GM12878 (cell line): ENCODE measurements at regions of chr5 and their contacts with region 1.

Region 1: DNA sequence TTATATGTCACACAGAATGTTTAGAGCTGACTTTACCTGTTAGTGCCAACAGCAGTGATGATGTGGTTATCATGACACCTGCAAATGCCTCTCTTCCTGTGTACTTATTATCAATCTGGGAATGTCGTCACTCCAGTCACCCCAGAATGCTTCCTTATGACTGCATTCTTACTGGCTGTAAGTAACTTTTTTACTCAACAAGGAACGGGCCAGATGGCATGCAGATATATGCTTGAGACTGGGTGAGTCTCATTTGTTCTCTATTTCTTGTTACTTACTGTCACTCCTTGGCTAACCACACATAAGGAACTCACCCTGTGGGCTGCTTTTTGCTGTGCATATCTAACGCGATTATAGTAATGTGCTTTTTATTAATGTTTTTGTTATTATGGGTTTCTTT is 385.5 kb upstream of the MEF2C start:
- DNase-seq: peak; percentile 51
- ATAC-seq: peak; percentile 38
- H3K4me3 ChIP-seq: no peak overlapping the region
- H3K27ac ChIP-seq: peak overlapping the region; percentile 43; the same call in 1 of the 2 replicates
- H3K4me1 ChIP-seq: peaks cover 46% of the 10 kb centered on the region
- H3K27me3 ChIP-seq: no peaks in the 10 kb centered on the region
- CTCF ChIP-seq: no peak
- EP300 ChIP-seq: no peak
- POLR2A ChIP-seq: no peak
- RAD21 ChIP-seq: 0 out of 2 replicates have a peak, but pooled peaks have one; percentile 12

Region 2: DNA sequence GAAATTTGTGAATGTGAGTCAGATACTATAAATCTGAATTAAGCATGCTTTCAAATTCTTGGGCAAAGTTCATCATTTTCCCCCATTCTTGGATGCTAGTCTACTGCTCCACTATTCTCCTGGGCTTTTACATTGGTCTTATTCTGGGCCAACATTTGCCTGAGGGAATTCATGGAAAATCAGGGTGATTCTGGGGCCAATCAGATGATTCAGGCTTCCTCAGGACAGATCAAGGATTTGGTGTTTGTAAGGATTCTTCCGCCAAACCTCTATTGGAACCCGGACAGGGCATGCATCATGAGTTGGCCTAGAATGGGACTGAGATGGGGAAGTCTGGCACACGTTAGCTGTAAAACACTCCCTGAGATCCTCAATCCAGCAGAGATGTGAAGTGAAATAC is 499.3 kb before region 1 on chr5:
- CTCF ChIA-PET with region 1: no interaction called
- POLR2A ChIA-PET with region 1: no interaction called
- RAD21 ChIA-PET with region 1: no interaction called
- SMC1A ChIA-PET with region 1: no interaction called
- in situ Hi-C with region 1: no loop called
- intact Hi-C with region 1: no loop called
- DNase-seq: no peak
- ATAC-seq: no peak
- H3K4me3 ChIP-seq: no peak overlapping the region
- H3K27ac ChIP-seq: no peak overlapping the region
- H3K4me1 ChIP-seq: peaks cover 3% of the 10 kb centered on the region; the same call in 1 of the 2 replicates
- H3K27me3 ChIP-seq: no peaks in the 10 kb centered on the region
- CTCF ChIP-seq: no peak
- EP300 ChIP-seq: no peak
- POLR2A ChIP-seq: no peak
- RAD21 ChIP-seq: no peak

Region 3: DNA sequence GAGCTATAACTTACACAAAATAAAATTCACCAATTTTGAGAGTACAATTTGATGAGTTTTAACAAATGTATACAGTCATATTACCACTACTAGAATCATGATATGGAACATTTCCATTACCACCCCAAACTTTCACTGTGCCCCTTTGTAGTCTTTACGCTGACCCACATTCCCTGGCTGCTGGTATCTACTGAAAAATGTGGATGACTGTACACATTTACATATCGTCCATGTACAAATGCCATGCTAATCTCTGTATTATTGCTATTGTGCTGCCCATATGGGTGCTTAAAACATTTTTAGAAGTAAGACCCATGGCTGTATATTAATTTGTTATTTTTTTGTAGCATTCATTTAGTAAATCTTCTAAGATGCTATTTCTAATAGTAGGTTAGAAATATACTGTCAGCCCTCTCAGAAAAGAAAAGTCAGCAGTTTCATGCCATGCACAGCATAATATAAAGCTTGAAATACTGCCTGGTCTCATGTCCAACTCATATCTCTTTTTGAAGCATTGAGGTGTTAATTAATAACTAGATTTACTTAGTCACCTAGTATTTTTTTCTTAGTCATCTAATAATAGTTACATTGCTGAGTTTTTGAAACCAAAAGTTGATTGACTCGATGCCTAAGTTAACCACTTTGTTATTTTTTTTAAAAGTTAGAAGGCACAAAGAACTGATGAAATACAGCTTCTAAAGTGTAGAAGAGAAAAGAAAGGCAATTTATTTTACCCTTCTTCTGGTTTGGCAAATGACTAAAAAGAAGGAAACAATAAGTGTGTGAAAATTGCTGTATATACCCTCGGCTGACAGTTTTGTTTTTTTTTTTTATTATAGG is 197.1 kb before region 1 on chr5:
- CTCF ChIA-PET with region 1: interaction called, 3 read pairs
- POLR2A ChIA-PET with region 1: interaction called, 4 read pairs
- RAD21 ChIA-PET with region 1: interaction called, 8 read pairs
- SMC1A ChIA-PET with region 1: interaction called, 10 read pairs
- in situ Hi-C with region 1: no loop called
- intact Hi-C with region 1: no loop called
- DNase-seq: peak; percentile 33
- ATAC-seq: peak; percentile 92
- H3K4me3 ChIP-seq: peak overlapping the region; percentile 58
- H3K27ac ChIP-seq: peak overlapping the region; percentile 92
- H3K4me1 ChIP-seq: peaks cover 14% of the 10 kb centered on the region
- H3K27me3 ChIP-seq: no peaks in the 10 kb centered on the region
- CTCF ChIP-seq: no peak
- EP300 ChIP-seq: peak; percentile 52 to 66; a peak in 2 of 4 replicates
- POLR2A ChIP-seq: no peak
- RAD21 ChIP-seq: 0 out of 2 replicates have a peak, but pooled peaks have one; percentile 2

Region 4: DNA sequence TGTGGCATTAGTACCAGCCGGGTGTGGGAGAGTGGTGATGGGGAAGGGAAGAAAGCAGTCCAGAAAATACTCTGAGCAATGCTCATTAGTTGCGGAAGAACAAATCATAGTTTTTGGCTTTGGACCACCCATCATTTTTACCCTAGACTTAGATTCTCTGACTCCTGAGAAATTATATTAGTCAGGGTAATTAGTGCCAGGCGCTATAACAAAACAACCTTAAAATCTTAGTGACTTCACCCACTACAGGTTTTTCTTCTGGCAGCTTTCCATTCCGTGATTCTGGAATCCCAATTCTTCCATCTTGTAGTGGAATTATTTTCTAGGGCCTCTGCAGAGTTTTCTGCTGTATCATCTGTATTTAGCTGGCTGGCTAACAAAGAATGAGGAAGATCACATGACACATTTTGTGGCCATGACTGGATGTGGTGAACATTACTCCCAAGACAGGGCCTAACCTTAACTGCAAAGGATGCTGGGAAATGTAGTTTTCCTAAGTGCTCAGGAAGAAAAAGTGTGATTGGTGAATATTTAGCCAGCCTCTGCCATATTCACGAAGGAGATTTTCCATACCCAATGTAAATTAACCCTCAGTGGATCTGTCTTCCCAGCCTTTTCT is 12.5 kb before region 1 on chr5:
- CTCF ChIA-PET with region 1: interaction called, 6 read pairs
- POLR2A ChIA-PET with region 1: no interaction called
- RAD21 ChIA-PET with region 1: interaction called, 3 read pairs
- SMC1A ChIA-PET with region 1: interaction called, 17 read pairs
- in situ Hi-C with region 1: no loop called
- intact Hi-C with region 1: no loop called
- DNase-seq: no peak
- ATAC-seq: peak; percentile 39; the same call in 2 of the 3 replicates
- H3K4me3 ChIP-seq: no peak overlapping the region
- H3K27ac ChIP-seq: no peak overlapping the region
- H3K4me1 ChIP-seq: no peaks in the 10 kb centered on the region
- H3K27me3 ChIP-seq: no peaks in the 10 kb centered on the region
- CTCF ChIP-seq: no peak
- EP300 ChIP-seq: no peak
- POLR2A ChIP-seq: no peak
- RAD21 ChIP-seq: no peak

Region 5: DNA sequence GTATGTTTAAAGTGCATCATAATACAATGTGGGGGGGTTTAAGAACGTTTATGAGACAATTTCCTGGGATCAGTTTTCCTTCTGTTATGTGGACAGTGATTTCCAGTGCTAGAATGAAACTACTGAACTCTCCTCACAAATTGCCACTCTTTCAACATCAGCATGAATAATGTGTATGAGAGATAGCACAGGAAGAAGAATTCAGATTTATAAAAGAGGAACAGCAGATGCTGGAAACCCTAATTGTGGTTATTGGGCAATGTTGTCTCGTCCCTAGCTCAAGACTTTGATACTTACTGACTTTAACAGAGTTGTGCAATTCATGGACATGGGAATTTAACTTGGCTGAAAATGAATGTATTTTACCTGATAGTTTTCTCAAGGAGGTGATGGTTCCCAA is 25.4 kb after region 1 on chr5:
- CTCF ChIA-PET with region 1: interaction called, 5 read pairs
- POLR2A ChIA-PET with region 1: interaction called, 3 read pairs
- RAD21 ChIA-PET with region 1: interaction called, 20 read pairs
- SMC1A ChIA-PET with region 1: interaction called, 20 read pairs
- in situ Hi-C with region 1: no loop called
- intact Hi-C with region 1: no loop called
- DNase-seq: no peak
- ATAC-seq: peak; percentile 34; the same call in 1 of the 3 replicates
- H3K4me3 ChIP-seq: no peak overlapping the region
- H3K27ac ChIP-seq: no peak overlapping the region
- H3K4me1 ChIP-seq: peaks cover 12% of the 10 kb centered on the region; the same call in 1 of the 2 replicates
- H3K27me3 ChIP-seq: no peaks in the 10 kb centered on the region
- CTCF ChIP-seq: no peak
- EP300 ChIP-seq: no peak
- POLR2A ChIP-seq: no peak
- RAD21 ChIP-seq: no peak

Region 6: DNA sequence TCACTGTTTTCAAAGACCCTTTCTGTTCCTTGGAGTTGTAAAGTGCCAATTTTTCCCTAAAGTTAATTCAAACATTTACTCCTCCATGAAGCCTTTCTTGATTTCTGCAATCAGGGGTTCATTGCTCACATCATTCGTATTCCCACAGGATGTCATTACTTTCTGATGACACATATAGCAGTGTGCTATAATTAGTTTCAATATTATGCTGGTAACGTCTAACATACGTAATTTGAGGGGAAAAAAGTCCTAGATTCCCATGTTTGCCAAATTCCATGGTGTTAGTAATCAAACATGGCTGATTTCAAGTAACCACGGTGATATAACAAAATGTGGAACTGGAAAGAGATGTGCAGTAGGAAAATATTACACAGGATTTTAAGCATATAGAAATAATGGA is 82.8 kb after region 1 on chr5:
- CTCF ChIA-PET with region 1: interaction called, 5 read pairs
- POLR2A ChIA-PET with region 1: no interaction called
- RAD21 ChIA-PET with region 1: interaction called, 40 read pairs
- SMC1A ChIA-PET with region 1: interaction called, 17 read pairs
- in situ Hi-C with region 1: no loop called
- intact Hi-C with region 1: no loop called
- DNase-seq: no peak
- ATAC-seq: peak; percentile 16
- H3K4me3 ChIP-seq: no peak overlapping the region
- H3K27ac ChIP-seq: peak overlapping the region; percentile 68; the same call in 1 of the 2 replicates
- H3K4me1 ChIP-seq: peaks cover 18% of the 10 kb centered on the region; the same call in 1 of the 2 replicates
- H3K27me3 ChIP-seq: no peaks in the 10 kb centered on the region
- CTCF ChIP-seq: no peak
- EP300 ChIP-seq: 0 out of 4 replicates have a peak, but pooled peaks of 1 of the 2 experiments have one; percentile 54
- POLR2A ChIP-seq: no peak
- RAD21 ChIP-seq: no peak

Region 7: DNA sequence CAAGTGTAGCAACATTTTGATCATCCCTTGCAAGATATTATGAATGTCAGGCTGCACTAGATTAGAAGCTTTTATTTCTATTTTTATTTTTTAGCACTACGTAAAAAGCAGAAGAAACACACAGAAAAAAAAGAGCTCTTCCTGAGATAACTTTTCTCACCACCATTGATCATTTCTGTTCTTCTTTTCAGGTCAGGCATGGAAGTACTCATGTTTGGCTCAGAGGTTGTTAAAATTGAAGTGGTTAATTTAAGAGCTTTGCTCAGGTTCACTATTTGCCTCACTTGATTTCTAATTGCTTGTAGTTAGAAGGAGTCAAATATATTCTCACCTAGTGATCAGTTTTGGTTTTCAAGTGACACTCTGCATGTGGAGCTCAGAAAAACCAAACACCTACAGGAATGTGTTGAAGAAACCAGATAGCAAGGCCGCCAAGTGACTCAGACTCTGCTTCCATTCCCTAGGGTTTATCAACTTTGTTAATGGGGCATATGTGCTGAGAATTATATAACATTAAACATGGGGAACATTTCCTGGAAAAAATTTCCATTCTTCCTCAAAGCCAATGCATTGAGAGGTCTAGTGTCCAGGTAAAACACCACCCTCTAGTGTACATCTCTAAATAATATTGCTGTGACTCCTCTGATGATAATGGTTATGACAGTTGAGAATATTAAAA is 461.3 kb after region 1 on chr5:
- CTCF ChIA-PET with region 1: interaction called, 12 read pairs
- POLR2A ChIA-PET with region 1: no interaction called
- RAD21 ChIA-PET with region 1: interaction called, 8 read pairs
- SMC1A ChIA-PET with region 1: interaction called, 9 read pairs
- in situ Hi-C with region 1: no loop called
- intact Hi-C with region 1: no loop called
- DNase-seq: peak; percentile 34
- ATAC-seq: peak; percentile 76
- H3K4me3 ChIP-seq: no peak overlapping the region
- H3K27ac ChIP-seq: no peak overlapping the region
- H3K4me1 ChIP-seq: peaks cover 7% of the 10 kb centered on the region; the same call in 1 of the 2 replicates
- H3K27me3 ChIP-seq: no peaks in the 10 kb centered on the region
- CTCF ChIP-seq: peak; percentile 26 to 54 (median 27); a peak in 4 of 6 replicates
- EP300 ChIP-seq: no peak
- POLR2A ChIP-seq: no peak
- RAD21 ChIP-seq: peak; percentile 65